Heart left ventricle (tissue), 16 donors: ENCODE measurements at regions of chr17 and their contacts with region 1.

Region 1: GRCh38 chr17:73645050-73645978 is 1.1 kb upstream of the SDK2 start:
- DNase-seq: peak; percentile 61 to 72 (median 65)
- ATAC-seq: peak; percentile 41 to 87 (median 77)
- H3K4me3 ChIP-seq: peak overlapping the region in 11 of 12 donors; percentile 20 to 68 (median 57)
- H3K27ac ChIP-seq: peak overlapping the region in 4 of 12 donors; percentile 20 to 50 (median 47)
- H3K4me1 ChIP-seq: peaks cover 0 to 30% (median 15%) of the 10 kb centered on the region in 12 donors
- H3K27me3 ChIP-seq: peaks cover 0 to 68% (median 13%) of the 10 kb centered on the region in 9 donors
- CTCF ChIP-seq: peak in 4 of 12 donors; percentile 7 to 35 (median 18)
- POLR2A ChIP-seq: no peak

Region 2: GRCh38 chr17:73532421-73532901 is 112.9 kb before region 1 on chr17:
- intact Hi-C with region 1: loop called in 1 of 10 experiments (anchors 10 kb)
- DNase-seq: peak in 1 of 5 donors; percentile 50
- ATAC-seq: peak in 2 of 4 donors; percentile 11 to 32
- H3K4me3 ChIP-seq: no peak overlapping the region
- H3K27ac ChIP-seq: no peak overlapping the region
- H3K4me1 ChIP-seq: peaks cover 0 to 8% (median 0%) of the 10 kb centered on the region in 12 donors
- H3K27me3 ChIP-seq: no peaks in the 10 kb centered on the region
- CTCF ChIP-seq: no peak
- POLR2A ChIP-seq: no peak

Region 3: DNA sequence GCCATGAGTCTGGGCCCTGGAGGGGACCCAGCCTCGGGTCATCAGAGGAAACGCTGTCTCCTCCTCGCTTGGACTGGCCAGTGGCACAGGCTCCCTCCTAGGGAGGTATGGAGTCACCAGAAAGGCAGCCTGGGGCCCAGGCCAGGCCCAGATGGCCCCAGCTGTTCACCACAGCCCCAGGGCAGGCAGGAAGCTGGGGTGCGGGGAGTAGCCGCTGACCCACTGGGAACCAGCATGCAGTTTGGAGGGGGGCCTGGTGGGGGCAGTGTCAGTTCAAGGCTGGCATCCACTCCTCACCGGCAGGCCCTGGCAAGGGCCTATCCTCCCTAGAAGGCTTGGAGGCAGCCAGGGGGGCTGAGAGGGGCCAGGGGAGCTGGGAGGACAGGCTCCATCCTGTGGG is 49.8 kb before region 1 on chr17:
- intact Hi-C with region 1: loop called in 1 of 10 experiments (anchors 5 kb)
- DNase-seq: peak; percentile 25 to 73 (median 66)
- ATAC-seq: peak in 3 of 4 donors; percentile 71 to 92 (median 75)
- H3K4me3 ChIP-seq: no peak overlapping the region
- H3K27ac ChIP-seq: no peak overlapping the region
- H3K4me1 ChIP-seq: peaks cover 0 to 14% (median under 1%) of the 10 kb centered on the region in 12 donors
- H3K27me3 ChIP-seq: no peaks in the 10 kb centered on the region
- CTCF ChIP-seq: peak in 9 of 12 donors; percentile 22 to 50 (median 32)
- POLR2A ChIP-seq: no peak

Region 4: GRCh38 chr17:73841431-73842060 is 196.2 kb after region 1 on chr17:
- intact Hi-C with region 1: loop called in 3 of 10 experiments (anchors 5 to 10 kb)
- DNase-seq: no peak
- ATAC-seq: peak in 3 of 4 donors; percentile 56 to 66 (median 66)
- H3K4me3 ChIP-seq: no peak overlapping the region
- H3K27ac ChIP-seq: no peak overlapping the region
- H3K4me1 ChIP-seq: no peaks in the 10 kb centered on the region
- H3K27me3 ChIP-seq: peaks cover 0 to 12% (median 0%) of the 10 kb centered on the region in 9 donors
- CTCF ChIP-seq: peak; percentile 31 to 68 (median 54)
- POLR2A ChIP-seq: no peak

Region 5: DNA sequence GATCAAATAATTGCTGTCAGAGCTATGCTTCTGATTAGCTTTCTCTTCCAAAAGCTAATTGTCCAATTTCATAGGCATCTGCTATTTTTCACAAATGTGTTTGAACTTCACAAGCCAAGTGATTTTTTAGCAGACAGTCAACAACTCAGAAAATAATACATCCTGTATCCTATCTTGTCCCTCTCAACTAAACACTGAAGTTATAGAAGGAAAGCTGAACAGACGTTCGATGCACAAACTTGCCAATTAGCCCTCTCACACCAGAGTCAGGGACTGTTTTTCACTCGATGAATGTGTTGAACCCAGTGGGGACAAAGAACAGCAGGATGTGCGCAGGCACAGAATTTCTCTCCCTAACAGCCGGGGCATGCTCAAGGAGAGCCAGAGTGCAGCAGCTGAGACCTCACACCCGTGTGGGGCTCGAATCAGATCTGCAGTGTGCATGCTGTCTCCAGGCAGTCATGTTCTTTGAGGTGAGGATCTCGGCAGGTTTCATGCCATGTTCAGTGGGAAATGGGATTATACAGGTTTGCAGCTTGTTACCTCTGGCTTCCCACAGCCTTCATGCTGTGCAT is 245.6 kb after region 1 on chr17:
- intact Hi-C with region 1: no loop called
- DNase-seq: no peak
- ATAC-seq: no peak
- H3K4me3 ChIP-seq: no peak overlapping the region
- H3K27ac ChIP-seq: no peak overlapping the region
- H3K4me1 ChIP-seq: no peaks in the 10 kb centered on the region
- H3K27me3 ChIP-seq: peaks cover 0 to 15% (median 0%) of the 10 kb centered on the region in 9 donors
- CTCF ChIP-seq: no peak
- POLR2A ChIP-seq: no peak

Region 6: DNA sequence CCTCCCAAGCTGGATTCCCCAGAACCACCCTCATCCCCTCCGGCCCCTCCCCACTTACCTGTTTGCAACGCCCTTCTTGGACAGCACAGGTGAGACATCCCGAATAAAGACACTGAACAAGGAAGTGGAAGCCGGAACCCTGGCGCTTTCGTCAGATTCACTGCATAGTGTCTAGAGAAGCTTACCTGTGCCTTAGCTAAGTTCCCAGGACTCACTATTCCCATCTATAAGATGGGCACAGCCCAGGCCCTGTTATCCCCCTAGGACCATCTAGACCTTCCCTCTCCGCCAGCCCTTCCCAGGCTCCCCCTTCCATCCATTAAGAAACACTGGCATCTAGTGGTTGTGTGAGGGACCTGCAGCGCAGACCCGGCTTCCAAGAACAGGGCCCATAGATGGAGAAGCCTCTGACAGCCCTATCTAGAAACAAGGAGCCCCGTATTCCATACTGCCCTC is 531.3 kb after region 1 on chr17:
- intact Hi-C with region 1: loop called in 6 of 10 experiments (anchors 10 kb)
- DNase-seq: peak in 4 of 5 donors; percentile 28 to 51 (median 42)
- ATAC-seq: peak; percentile 72 to 94 (median 82)
- H3K4me3 ChIP-seq: no peak overlapping the region
- H3K27ac ChIP-seq: no peak overlapping the region
- H3K4me1 ChIP-seq: no peaks in the 10 kb centered on the region
- H3K27me3 ChIP-seq: peaks cover 0 to 68% (median 15%) of the 10 kb centered on the region in 9 donors
- CTCF ChIP-seq: peak; percentile 66 to 89 (median 76)
- POLR2A ChIP-seq: no peak